MCF 10A (cell line): ENCODE measurements at regions of chr18 and their contacts with region 1.

Region 1: DNA sequence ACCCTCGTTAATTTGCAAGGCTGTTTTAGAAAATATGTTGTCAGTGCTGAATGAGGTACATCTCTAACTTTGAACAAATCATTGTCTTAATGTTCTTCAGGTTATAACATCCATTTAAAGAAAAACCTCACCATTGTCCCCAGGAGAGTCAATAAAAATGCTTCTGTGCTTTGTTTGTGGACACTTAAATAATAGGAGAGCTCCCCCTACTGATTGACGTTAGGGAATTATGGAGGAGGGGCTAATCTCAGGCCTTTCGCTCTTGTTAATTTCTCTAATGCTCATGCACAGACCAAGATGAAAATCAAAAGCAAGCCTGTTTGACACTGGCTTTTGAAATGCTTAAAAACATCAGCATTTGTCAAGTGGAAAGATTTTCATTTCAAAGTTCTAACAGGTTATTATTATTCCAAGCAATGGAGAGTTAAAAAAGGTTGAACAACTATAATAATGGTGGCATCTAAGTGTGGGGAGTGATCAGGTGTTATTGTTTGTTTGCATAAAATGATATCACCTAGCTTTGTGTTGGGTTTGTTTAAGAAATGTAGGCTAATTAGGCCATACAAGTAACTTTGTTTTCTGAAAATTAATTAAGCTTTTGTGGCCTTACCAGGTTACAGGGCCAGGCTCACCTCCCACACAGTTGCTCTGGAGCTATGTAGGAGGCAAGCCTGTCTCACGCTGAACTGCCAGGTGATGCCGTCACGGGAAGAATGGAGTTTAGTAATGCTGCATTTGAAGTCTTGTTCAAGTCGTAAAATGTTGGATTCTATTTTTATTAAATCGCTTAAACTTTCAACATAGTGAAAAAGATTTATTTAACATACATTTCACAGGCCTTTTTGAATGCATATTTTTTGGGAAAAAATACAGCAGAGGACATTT is 51.7 kb upstream of the SMIM21 start:
- DNase-seq: peak; percentile 69
- H3K4me3 Mint-ChIP-seq: no peak overlapping the region
- H3K27ac Mint-ChIP-seq: no peak overlapping the region
- H3K4me1 Mint-ChIP-seq: peaks cover 16% of the 10 kb centered on the region
- H3K27me3 Mint-ChIP-seq: no peaks in the 10 kb centered on the region
- CTCF ChIP-seq: peak; percentile 57

Region 2: GRCh38 chr18:74896390-74896991 is 582.7 kb before region 1 on chr18:
- CTCF ChIA-PET with region 1: interaction called, 5 read pairs
- POLR2A ChIA-PET with region 1: no interaction called
- intact Hi-C with region 1: loop called (anchors 1 kb)
- DNase-seq: peak; percentile 60
- H3K4me3 Mint-ChIP-seq: no peak overlapping the region
- H3K27ac Mint-ChIP-seq: no peak overlapping the region
- H3K4me1 Mint-ChIP-seq: peaks cover 19% of the 10 kb centered on the region
- H3K27me3 Mint-ChIP-seq: no peaks in the 10 kb centered on the region
- CTCF ChIP-seq: peak; percentile 52

Region 3: DNA sequence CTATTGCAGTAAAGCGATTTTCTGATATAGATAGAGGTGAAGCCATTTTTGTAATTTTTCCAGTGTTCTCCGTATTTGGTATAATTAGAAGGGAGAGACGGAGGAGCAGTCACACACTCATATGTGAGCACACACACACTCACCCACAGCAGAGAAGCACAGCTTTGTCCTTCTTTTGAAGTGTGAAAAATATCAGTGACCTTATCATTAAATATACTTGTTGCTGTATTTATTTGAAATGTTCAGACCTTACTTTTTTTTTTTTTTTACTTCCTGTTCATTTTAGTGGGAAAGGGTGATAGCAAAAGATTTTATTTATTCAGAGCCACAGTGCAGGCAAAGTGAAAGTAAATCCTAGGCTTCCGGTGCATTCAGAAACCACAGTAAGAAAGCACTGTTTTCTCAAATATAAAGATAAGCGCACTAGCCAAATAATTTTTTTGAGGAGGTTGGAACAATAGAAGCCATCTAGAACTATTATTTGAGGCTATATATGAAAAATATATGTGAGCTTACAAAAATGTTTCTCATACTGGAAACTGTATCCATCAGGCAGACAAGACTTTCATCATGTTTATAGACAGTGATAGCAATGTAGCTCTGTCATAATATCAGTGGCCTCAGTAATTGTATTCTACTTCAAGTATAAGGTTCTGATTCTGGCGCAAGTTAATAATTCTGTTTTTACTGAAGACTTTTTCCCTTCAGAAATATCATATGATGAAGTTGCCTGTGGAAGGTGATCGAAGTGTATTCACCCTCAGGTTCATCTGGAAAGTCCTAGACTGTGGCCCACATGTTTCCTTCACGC is 231.4 kb before region 1 on chr18:
- CTCF ChIA-PET with region 1: interaction called, 3 read pairs
- POLR2A ChIA-PET with region 1: no interaction called
- intact Hi-C with region 1: loop called (anchors 5 kb)
- DNase-seq: peak; percentile 50
- H3K4me3 Mint-ChIP-seq: peak overlapping the region; percentile 80
- H3K27ac Mint-ChIP-seq: peak overlapping the region; percentile 95
- H3K4me1 Mint-ChIP-seq: peaks cover 34% of the 10 kb centered on the region
- H3K27me3 Mint-ChIP-seq: no peaks in the 10 kb centered on the region
- CTCF ChIP-seq: no peak

Region 4: GRCh38 chr18:75727456-75727855 is 248.2 kb after region 1 on chr18:
- CTCF ChIA-PET with region 1: no interaction called
- POLR2A ChIA-PET with region 1: no interaction called
- intact Hi-C with region 1: loop called (anchors 2 kb)
- DNase-seq: peak; percentile 69
- H3K4me3 Mint-ChIP-seq: no peak overlapping the region
- H3K27ac Mint-ChIP-seq: no peak overlapping the region
- H3K4me1 Mint-ChIP-seq: no peaks in the 10 kb centered on the region
- H3K27me3 Mint-ChIP-seq: no peaks in the 10 kb centered on the region
- CTCF ChIP-seq: peak; percentile 45

Region 5: DNA sequence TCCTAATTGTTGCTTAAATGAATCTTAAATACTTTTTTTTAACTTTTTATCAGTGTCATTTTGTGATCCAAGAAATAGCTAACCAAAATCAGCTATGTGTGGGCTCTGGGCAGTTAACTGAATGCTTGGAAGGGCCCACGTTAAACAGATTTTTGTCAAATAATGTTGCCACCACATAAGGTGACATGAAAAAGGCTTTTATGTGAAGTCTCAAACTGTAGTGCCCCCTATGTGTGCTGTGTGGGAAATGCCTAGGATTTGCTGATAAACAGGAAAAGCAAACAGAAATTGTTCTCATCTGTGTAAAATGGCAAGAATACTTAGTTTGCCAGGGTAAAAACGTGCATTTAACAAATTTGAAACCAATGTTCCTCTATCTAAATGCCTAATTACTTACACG is 773.6 kb after region 1 on chr18:
- CTCF ChIA-PET with region 1: interaction called, 9 read pairs
- POLR2A ChIA-PET with region 1: no interaction called
- intact Hi-C with region 1: loop called (anchors 2 kb)
- DNase-seq: peak; percentile 36
- H3K4me3 Mint-ChIP-seq: no peak overlapping the region
- H3K27ac Mint-ChIP-seq: no peak overlapping the region
- H3K4me1 Mint-ChIP-seq: no peaks in the 10 kb centered on the region
- H3K27me3 Mint-ChIP-seq: no peaks in the 10 kb centered on the region
- CTCF ChIP-seq: peak; percentile 63

Region 6: GRCh38 chr18:76349067-76349715 is 870.0 kb after region 1 on chr18:
- CTCF ChIA-PET with region 1: interaction called, 3 read pairs
- POLR2A ChIA-PET with region 1: no interaction called
- intact Hi-C with region 1: loop called (anchors 5 kb)
- DNase-seq: peak; percentile 85
- H3K4me3 Mint-ChIP-seq: peak overlapping the region; percentile 63
- H3K27ac Mint-ChIP-seq: peak overlapping the region; percentile 42
- H3K4me1 Mint-ChIP-seq: peaks cover 21% of the 10 kb centered on the region
- H3K27me3 Mint-ChIP-seq: no peaks in the 10 kb centered on the region
- CTCF ChIP-seq: peak; percentile 83